Lower leg skin (tissue), 4 donors: ENCODE measurements at regions of chr3 and their contacts with region 1.

Region 1: GRCh38 chr3:7728566-7729519 is 772.8 kb upstream of the LMCD1 start:
- DNase-seq: no peak
- H3K4me3 ChIP-seq: no peak overlapping the region
- CTCF ChIP-seq: no peak
- POLR2A ChIP-seq: no peak

Region 2: GRCh38 chr3:7134234-7134633 is 594.6 kb before region 1 on chr3:
- intact Hi-C with region 1: loop called (anchors 5 kb)
- DNase-seq: no peak
- H3K4me3 ChIP-seq: no peak overlapping the region
- CTCF ChIP-seq: no peak
- POLR2A ChIP-seq: no peak